ENCODE measurements at regions of chr4 and their contacts with region 1.

Region 1: GRCh38 chr4:146998157-146998556 is 52.5 kb upstream of the TTC29 start:
- DNase-seq: no peak
- H3K4me3 ChIP-seq: no peak overlapping the region
- H3K27ac ChIP-seq: no peak overlapping the region
- H3K4me1 ChIP-seq: no peaks in the 10 kb centered on the region
- H3K27me3 ChIP-seq: no peaks in the 10 kb centered on the region
- CTCF ChIP-seq: no peak
- POLR2A ChIP-seq: no peak

Region 2: DNA sequence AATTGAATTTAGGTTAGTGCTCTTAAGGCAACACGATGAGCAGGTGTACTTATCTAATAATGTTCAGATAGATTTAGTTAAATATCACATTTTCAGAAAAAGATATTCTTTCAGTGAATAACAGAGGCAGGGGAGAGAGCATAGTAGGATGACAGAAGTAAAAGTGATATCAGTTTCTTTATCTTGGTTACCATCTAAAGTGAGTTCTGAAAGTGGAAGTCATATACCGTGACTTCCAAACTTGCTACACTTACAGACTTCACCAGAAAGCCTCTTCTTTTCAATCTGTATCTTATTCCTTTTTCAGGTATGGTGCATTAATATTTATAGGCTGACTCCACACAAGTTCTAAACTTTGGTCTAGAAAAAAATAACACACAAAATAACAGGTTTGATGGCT is 234.6 kb before region 1 on chr4:
- intact Hi-C with region 1: no loop called
- DNase-seq: no peak
- H3K4me3 ChIP-seq: no peak overlapping the region
- H3K27ac ChIP-seq: no peak overlapping the region
- H3K4me1 ChIP-seq: no peaks in the 10 kb centered on the region
- H3K27me3 ChIP-seq: no peaks in the 10 kb centered on the region
- CTCF ChIP-seq: no peak
- POLR2A ChIP-seq: no peak

Region 3: GRCh38 chr4:147019061-147019460 is 20.9 kb after region 1 on chr4:
- intact Hi-C with region 1: loop called (anchors 1 kb)
- DNase-seq: peak; percentile 24 to 57
- H3K4me3 ChIP-seq: no peak overlapping the region
- H3K27ac ChIP-seq: no peak overlapping the region
- H3K4me1 ChIP-seq: no peaks in the 10 kb centered on the region
- H3K27me3 ChIP-seq: no peaks in the 10 kb centered on the region
- CTCF ChIP-seq: peak in 1 of 3 donors; percentile 56
- POLR2A ChIP-seq: no peak